ENCODE measurements at regions of chr18 and their contacts with region 1.

Region 1: GRCh38 chr18:4960578-4960977 is 236.5 kb downstream of the AKAIN1 start:
- DNase-seq: no peak
- H3K4me3 ChIP-seq: no peak overlapping the region
- H3K27ac ChIP-seq: no peak overlapping the region
- H3K4me1 ChIP-seq: no peaks in the 10 kb centered on the region
- H3K27me3 ChIP-seq: no peaks in the 10 kb centered on the region
- CTCF ChIP-seq: no peak
- POLR2A ChIP-seq: no peak

Region 2: GRCh38 chr18:4908328-4908727 is 52.2 kb before region 1 on chr18:
- intact Hi-C with region 1: no loop called
- DNase-seq: no peak
- H3K4me3 ChIP-seq: no peak overlapping the region
- H3K27ac ChIP-seq: no peak overlapping the region
- H3K4me1 ChIP-seq: no peaks in the 10 kb centered on the region
- H3K27me3 ChIP-seq: no peaks in the 10 kb centered on the region
- CTCF ChIP-seq: no peak
- POLR2A ChIP-seq: no peak

Region 3: GRCh38 chr18:4987452-4988405 is 27.2 kb after region 1 on chr18:
- intact Hi-C with region 1: no loop called
- DNase-seq: no peak
- H3K4me3 ChIP-seq: no peak overlapping the region
- H3K27ac ChIP-seq: no peak overlapping the region
- H3K4me1 ChIP-seq: no peaks in the 10 kb centered on the region
- H3K27me3 ChIP-seq: no peaks in the 10 kb centered on the region
- CTCF ChIP-seq: no peak
- POLR2A ChIP-seq: no peak

Region 4: GRCh38 chr18:6109743-6110142 is 1149.2 kb after region 1 on chr18:
- intact Hi-C with region 1: no loop called
- DNase-seq: no peak
- H3K4me3 ChIP-seq: no peak overlapping the region
- H3K27ac ChIP-seq: peak overlapping the region in 1 of 2 donors; percentile 32
- H3K4me1 ChIP-seq: no peaks in the 10 kb centered on the region
- H3K27me3 ChIP-seq: no peaks in the 10 kb centered on the region
- CTCF ChIP-seq: no peak
- POLR2A ChIP-seq: no peak

Region 5: DNA sequence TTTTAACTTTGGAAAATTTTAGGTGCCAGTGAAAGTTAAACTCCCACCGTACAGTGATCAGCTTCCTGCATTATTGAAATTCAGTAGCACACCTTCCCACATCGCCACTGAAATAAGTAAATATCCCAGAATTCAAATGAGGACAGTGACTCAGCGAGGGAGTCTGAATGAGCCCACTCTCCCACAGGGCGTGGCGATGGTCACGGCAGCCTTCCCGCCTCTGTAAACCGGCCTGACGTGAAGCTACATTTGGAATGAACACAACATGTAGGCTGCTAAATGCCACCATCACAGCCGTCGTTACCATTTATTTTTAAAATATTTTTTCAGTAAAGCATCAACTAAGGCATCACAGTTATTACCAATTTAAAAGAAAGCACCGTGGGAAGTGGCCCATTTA is 1233.5 kb after region 1 on chr18:
- intact Hi-C with region 1: loop called (anchors 5 kb)
- DNase-seq: no peak
- H3K4me3 ChIP-seq: no peak overlapping the region
- H3K27ac ChIP-seq: no peak overlapping the region
- H3K4me1 ChIP-seq: no peaks in the 10 kb centered on the region
- H3K27me3 ChIP-seq: no peaks in the 10 kb centered on the region
- CTCF ChIP-seq: no peak
- POLR2A ChIP-seq: no peak

Measured in breast epithelium (tissue), 4 donors.